B cell (primary cell): ENCODE measurements at regions of chr19 and their contacts with region 1.

Region 1: DNA sequence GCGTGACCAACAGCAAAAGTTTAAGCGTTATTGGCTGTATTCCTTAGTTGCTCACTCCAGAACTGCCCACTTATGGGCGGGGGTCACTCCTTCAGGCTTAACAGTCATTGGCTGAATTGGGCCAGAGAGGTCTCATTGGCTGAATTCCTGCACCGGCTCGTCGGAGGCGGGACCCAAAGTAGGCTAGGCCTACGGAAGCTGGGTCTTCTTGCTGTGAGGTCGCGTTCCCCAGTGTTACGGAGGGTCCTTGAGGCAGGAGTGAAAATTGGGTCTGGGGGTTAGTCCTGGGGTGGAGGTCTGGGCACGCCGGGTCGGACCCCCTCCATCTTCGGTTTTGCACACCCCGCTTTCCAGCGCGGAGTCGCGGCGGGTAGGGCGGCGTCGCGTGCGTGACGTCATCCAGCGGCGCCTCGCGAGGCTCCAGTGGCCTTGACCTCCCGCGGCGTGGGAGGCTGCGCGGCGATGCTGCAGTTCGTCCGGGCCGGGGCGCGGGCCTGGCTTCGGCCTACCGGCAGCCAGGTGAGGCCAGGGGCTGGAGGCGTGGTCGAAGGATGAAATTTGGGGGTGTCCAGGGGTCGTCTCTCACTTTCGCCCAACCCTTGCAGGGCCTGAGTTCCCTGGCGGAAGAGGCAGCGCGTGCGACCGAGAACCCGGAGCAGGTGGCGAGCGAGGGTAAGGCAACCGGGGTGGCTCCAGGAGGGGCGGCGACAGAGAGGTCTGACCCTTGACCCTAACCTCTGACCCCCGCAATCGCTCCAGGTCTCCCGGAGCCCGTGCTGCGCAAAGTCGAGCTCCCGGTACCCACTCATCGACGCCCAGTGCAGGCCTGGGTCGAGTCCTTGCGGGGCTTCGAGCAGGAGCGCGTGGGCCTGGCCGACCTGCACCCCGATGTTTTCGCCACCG is at the start of gene MRPL4:
- DNase-seq: peak; percentile 99
- ATAC-seq: peak; percentile 94
- H3K4me3 ChIP-seq: peak within 1 kb of the TSS; percentile 79 to 96 (median 92)
- H3K4me3 Mint-ChIP-seq: peak within 1 kb of the TSS; percentile 97
- H3K27ac ChIP-seq: peak within 1 kb of the TSS; percentile 48 to 79
- H3K27ac Mint-ChIP-seq: peak within 1 kb of the TSS; percentile 97
- H3K4me1 ChIP-seq: peaks cover 6 to 13% of the 10 kb centered on the region in 2 donors
- H3K4me1 Mint-ChIP-seq: peaks cover 24% of the 10 kb centered on the region
- H3K27me3 ChIP-seq: no peaks in the 10 kb centered on the region
- H3K27me3 Mint-ChIP-seq: no peaks in the 10 kb centered on the region
- CTCF ChIP-seq: no peak
- total RNA-seq, gene MRPL4: 39.8 and 40.1 TPM in 2 replicates

Region 2: GRCh38 chr19:10095948-10096621 is 156.0 kb before region 1 on chr19:
- CTCF ChIA-PET with region 1: interaction called, 36 read pairs
- POLR2A ChIA-PET with region 1: interaction called, 4 read pairs
- intact Hi-C with region 1: loop called (anchors 5 kb)
- DNase-seq: peak; percentile 96
- ATAC-seq: peak; percentile 91
- H3K4me3 ChIP-seq: peak overlapping the region in 4 of 5 experiments; percentile 40 to 55 (median 50)
- H3K4me3 Mint-ChIP-seq: peak overlapping the region; percentile 69
- H3K27ac ChIP-seq: peak overlapping the region; percentile 62 to 74
- H3K27ac Mint-ChIP-seq: peak overlapping the region; percentile 67
- H3K4me1 ChIP-seq: peaks cover 27 to 49% of the 10 kb centered on the region in 2 donors
- H3K4me1 Mint-ChIP-seq: peaks cover 39% of the 10 kb centered on the region
- H3K27me3 ChIP-seq: no peaks in the 10 kb centered on the region
- H3K27me3 Mint-ChIP-seq: no peaks in the 10 kb centered on the region
- CTCF ChIP-seq: no peak

Region 3: GRCh38 chr19:10112895-10113591 is 139.0 kb before region 1 on chr19:
- CTCF ChIA-PET with region 1: interaction called, 16 read pairs
- POLR2A ChIA-PET with region 1: no interaction called
- intact Hi-C with region 1: no loop called
- DNase-seq: peak; percentile 78
- ATAC-seq: peak; percentile 48
- H3K4me3 ChIP-seq: peak overlapping the region in 1 of 5 experiments; percentile 9
- H3K4me3 Mint-ChIP-seq: peak overlapping the region; percentile 81
- H3K27ac ChIP-seq: peak overlapping the region in 1 of 2 donors; percentile 40
- H3K27ac Mint-ChIP-seq: peak overlapping the region; percentile 90
- H3K4me1 ChIP-seq: peaks cover 27 to 35% of the 10 kb centered on the region in 2 donors
- H3K4me1 Mint-ChIP-seq: peaks cover 38% of the 10 kb centered on the region
- H3K27me3 ChIP-seq: no peaks in the 10 kb centered on the region
- H3K27me3 Mint-ChIP-seq: no peaks in the 10 kb centered on the region
- CTCF ChIP-seq: peak; percentile 76

Region 4: GRCh38 chr19:10142701-10143375 is 109.2 kb before region 1 on chr19:
- CTCF ChIA-PET with region 1: interaction called, 10 read pairs
- POLR2A ChIA-PET with region 1: no interaction called
- intact Hi-C with region 1: no loop called
- DNase-seq: no peak
- ATAC-seq: no peak
- H3K4me3 ChIP-seq: no peak overlapping the region
- H3K4me3 Mint-ChIP-seq: no peak overlapping the region
- H3K27ac ChIP-seq: no peak overlapping the region
- H3K27ac Mint-ChIP-seq: no peak overlapping the region
- H3K4me1 ChIP-seq: no peaks in the 10 kb centered on the region
- H3K4me1 Mint-ChIP-seq: no peaks in the 10 kb centered on the region
- H3K27me3 ChIP-seq: no peaks in the 10 kb centered on the region
- H3K27me3 Mint-ChIP-seq: no peaks in the 10 kb centered on the region
- CTCF ChIP-seq: no peak

Region 5: GRCh38 chr19:10219678-10220077 is 32.4 kb before region 1 on chr19:
- CTCF ChIA-PET with region 1: interaction called, 236 read pairs
- POLR2A ChIA-PET with region 1: no interaction called
- intact Hi-C with region 1: loop called (anchors 5 kb)
- DNase-seq: peak; percentile 66
- ATAC-seq: peak; percentile 84
- H3K4me3 ChIP-seq: no peak overlapping the region
- H3K4me3 Mint-ChIP-seq: no peak overlapping the region
- H3K27ac ChIP-seq: no peak overlapping the region
- H3K27ac Mint-ChIP-seq: no peak overlapping the region
- H3K4me1 ChIP-seq: peaks cover 5 to 6% of the 10 kb centered on the region in 2 donors
- H3K4me1 Mint-ChIP-seq: peaks cover 10% of the 10 kb centered on the region
- H3K27me3 ChIP-seq: no peaks in the 10 kb centered on the region
- H3K27me3 Mint-ChIP-seq: no peaks in the 10 kb centered on the region
- CTCF ChIP-seq: peak; percentile 39

Region 6: GRCh38 chr19:10238172-10238783 is 13.8 kb before region 1 on chr19:
- CTCF ChIA-PET with region 1: interaction called, 236 read pairs
- POLR2A ChIA-PET with region 1: interaction called, 10 read pairs
- intact Hi-C with region 1: loop called (anchors 1 kb)
- DNase-seq: peak; percentile 51
- ATAC-seq: no peak
- H3K4me3 ChIP-seq: no peak overlapping the region
- H3K4me3 Mint-ChIP-seq: peak overlapping the region; percentile 29
- H3K27ac ChIP-seq: no peak overlapping the region
- H3K27ac Mint-ChIP-seq: peak overlapping the region; percentile 53
- H3K4me1 ChIP-seq: peaks cover 40 to 63% of the 10 kb centered on the region in 2 donors
- H3K4me1 Mint-ChIP-seq: peaks cover 40% of the 10 kb centered on the region
- H3K27me3 ChIP-seq: no peaks in the 10 kb centered on the region
- H3K27me3 Mint-ChIP-seq: no peaks in the 10 kb centered on the region
- CTCF ChIP-seq: no peak